Activated CD8-positive, alpha-beta memory T cell treated with anti-CD3 and anti-CD28 coated beads, Interleukin-2, amount 10 ng/mL, durations not matched to agents 7 days and 5 days (primary cell): ENCODE measurements at regions of chr17 and their contacts with region 1.

Region 1: GRCh38 chr17:55348749-55349354 is 72.8 kb downstream of the MMD start:
- DNase-seq: peak; percentile 54
- ATAC-seq: no peak
- H3K4me3 Mint-ChIP-seq: no peak overlapping the region
- H3K27ac Mint-ChIP-seq: no peak overlapping the region
- H3K4me1 Mint-ChIP-seq: peaks cover 52% of the 10 kb centered on the region
- H3K27me3 Mint-ChIP-seq: no peaks in the 10 kb centered on the region

Region 2: DNA sequence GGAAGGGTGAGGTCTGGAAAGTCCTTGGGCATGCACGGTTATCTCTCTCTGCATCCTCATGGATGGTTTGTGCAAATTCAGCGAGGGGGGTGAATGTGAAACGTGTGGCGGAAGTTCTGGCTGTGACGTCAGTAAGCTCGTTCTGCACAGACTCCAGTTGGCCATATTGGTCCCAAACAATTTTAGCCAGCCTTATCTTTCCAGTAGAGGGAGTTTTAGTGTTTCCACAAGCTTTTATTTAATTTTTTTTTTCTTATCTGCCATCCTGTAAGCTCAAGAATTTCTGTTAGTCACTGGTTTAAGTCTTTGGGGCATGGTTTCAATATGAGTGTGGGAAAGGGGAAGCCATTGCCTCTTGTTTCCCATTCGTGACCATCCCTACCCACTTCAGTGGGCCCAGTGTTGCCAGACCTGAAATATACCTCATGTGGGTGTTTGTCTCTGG is 45.1 kb before region 1 on chr17:
- CTCF ChIA-PET with region 1: interaction called, 19 read pairs
- DNase-seq: no peak
- ATAC-seq: peak; percentile 51
- H3K4me3 Mint-ChIP-seq: no peak overlapping the region
- H3K27ac Mint-ChIP-seq: no peak overlapping the region
- H3K4me1 Mint-ChIP-seq: peaks cover 19% of the 10 kb centered on the region
- H3K27me3 Mint-ChIP-seq: peaks cover 7% of the 10 kb centered on the region

Region 3: DNA sequence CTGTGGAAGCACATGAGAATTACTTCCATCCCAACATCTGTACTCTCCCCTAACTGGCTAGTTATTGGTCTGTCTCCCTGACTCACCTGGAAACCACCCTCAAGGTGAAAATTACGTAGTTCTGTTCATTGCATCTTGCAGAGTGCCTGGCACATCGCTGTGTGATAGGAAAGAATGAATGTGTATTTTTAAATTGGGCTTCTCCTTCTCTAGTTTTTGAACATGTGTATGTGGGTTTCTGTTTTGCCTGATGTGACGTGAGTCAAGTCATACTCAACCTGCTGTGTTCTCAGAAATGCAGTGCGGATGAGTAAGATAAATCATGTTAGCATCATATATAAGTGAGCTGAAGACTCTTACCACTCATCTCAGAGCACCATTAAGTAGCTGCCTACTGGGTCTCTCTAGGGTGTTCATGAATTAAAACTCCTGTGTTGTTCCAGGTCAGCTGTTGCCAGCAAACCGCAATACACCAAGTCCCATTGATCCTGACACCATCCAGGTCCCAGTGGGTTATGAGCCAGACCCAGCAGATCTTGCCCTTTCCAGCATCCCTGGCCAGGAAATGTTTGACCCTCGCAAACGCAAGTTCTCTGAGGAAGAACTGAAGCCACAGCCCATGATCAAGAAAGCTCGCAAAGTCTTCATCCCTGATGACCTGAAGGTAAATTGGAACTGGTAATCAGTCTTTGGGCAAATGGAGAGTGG is 33.9 kb before region 1 on chr17:
- CTCF ChIA-PET with region 1: interaction called, 12 read pairs
- DNase-seq: peak; percentile 58
- ATAC-seq: peak; percentile 91
- H3K4me3 Mint-ChIP-seq: peak overlapping the region; percentile 1
- H3K27ac Mint-ChIP-seq: peak overlapping the region; percentile 62
- H3K4me1 Mint-ChIP-seq: peaks cover 27% of the 10 kb centered on the region
- H3K27me3 Mint-ChIP-seq: no peaks in the 10 kb centered on the region

Region 4: DNA sequence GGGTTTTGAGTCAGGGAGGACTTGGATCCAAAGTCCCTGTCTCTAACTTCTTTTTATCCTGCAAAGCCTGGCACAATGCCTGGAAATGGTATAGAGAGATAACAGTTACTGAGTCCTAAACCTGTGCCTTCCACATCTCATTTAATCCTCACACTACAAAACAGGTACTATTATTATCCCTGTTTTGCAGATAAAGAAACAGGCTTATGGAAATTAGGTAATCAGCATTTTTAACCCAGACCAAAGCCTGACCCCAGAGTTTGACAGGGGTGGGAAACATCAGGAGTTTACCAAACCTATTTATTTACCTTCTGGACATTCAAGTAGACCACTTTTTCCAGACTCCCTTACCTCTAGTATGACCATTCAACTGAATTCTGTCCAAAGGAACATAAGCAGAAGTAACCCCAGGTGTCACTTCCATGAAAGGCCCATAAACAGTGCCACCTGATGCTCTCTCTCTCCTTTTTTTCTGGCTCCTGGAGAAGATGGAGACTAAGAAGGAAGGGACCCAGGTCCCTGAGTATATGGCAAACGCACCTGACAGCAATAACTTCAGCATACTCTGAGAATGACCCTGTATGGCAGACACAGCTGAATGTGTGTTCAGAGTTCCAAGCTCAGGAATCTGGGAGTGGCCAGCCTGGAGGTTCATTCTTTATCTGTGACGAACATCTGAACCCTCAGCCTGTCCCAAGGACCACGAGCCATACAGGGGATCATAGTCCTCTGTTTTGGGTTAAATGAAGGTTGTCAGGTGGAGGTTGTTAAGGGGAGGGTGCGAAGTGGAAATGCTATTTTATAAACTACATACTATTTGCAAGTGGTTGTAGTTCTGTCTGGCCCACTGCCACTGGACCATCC is 21.4 kb before region 1 on chr17:
- CTCF ChIA-PET with region 1: interaction called, 12 read pairs
- DNase-seq: no peak
- ATAC-seq: no peak
- H3K4me3 Mint-ChIP-seq: no peak overlapping the region
- H3K27ac Mint-ChIP-seq: no peak overlapping the region
- H3K4me1 Mint-ChIP-seq: peaks cover 4% of the 10 kb centered on the region
- H3K27me3 Mint-ChIP-seq: peaks cover 11% of the 10 kb centered on the region

Region 5: GRCh38 chr17:55394357-55395021 is 45.6 kb after region 1 on chr17:
- CTCF ChIA-PET with region 1: no interaction called
- DNase-seq: no peak
- ATAC-seq: no peak
- H3K4me3 Mint-ChIP-seq: no peak overlapping the region
- H3K27ac Mint-ChIP-seq: no peak overlapping the region
- H3K4me1 Mint-ChIP-seq: no peaks in the 10 kb centered on the region
- H3K27me3 Mint-ChIP-seq: no peaks in the 10 kb centered on the region